Activated T-helper 1 cell treated with anti-CD3 and anti-CD28 coated beads, Interleukin-12 subunit alpha, Interleukin-12 subunit beta, Interleukin-2, Interleukin-4 antibody, amounts not matched to agents 30 ng/mL and 10 ng/mL and 1 ng/mL, durations not matched to agents 14 hours and 24 hours and 36 hours (primary cell): ENCODE measurements at regions of chr16 and their contacts with region 1.

Region 1: DNA sequence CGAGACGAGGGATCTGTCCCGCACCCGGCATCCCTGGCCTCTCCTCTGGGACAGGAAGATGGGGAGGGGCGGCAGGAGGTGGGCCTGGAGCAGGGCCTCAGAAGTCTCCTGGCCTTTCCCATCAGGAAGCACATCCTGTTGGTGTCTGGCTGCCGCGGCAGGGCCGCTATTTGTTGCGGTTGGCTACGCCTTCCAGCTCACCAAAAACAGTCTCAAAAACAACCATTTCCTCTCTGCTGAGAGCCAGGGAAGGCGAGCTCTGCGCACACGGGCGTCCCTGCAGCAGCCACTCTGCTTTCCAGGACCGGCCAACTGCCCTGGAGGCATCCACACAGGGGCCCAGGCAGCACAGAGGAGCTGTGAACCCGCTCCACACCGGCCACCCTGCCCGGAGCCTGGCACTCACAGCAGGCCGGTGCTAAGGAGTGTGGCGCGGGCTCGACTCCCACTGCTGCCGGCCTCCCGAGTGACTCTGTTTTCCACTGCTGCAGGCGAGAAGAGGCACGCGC is at the start of gene TMEM204:
- DNase-seq: peak; percentile 47
- H3K4me3 Mint-ChIP-seq: peak within 1 kb of the TSS; percentile 98
- H3K27ac Mint-ChIP-seq: peak within 1 kb of the TSS; percentile 92
- H3K4me1 Mint-ChIP-seq: peaks cover 44% of the 10 kb centered on the region
- H3K27me3 Mint-ChIP-seq: peaks cover 2% of the 10 kb centered on the region
- total RNA-seq, gene TMEM204: 22.8 and 23.7 TPM in 2 replicates

Region 2: GRCh38 chr16:1579201-1579600 is 45.7 kb after region 1 on chr16:
- intact Hi-C with region 1: loop called (anchors 1 kb)
- DNase-seq: no peak
- H3K4me3 Mint-ChIP-seq: no peak overlapping the region
- H3K27ac Mint-ChIP-seq: no peak overlapping the region
- H3K4me1 Mint-ChIP-seq: no peaks in the 10 kb centered on the region
- H3K27me3 Mint-ChIP-seq: no peaks in the 10 kb centered on the region

Region 3: DNA sequence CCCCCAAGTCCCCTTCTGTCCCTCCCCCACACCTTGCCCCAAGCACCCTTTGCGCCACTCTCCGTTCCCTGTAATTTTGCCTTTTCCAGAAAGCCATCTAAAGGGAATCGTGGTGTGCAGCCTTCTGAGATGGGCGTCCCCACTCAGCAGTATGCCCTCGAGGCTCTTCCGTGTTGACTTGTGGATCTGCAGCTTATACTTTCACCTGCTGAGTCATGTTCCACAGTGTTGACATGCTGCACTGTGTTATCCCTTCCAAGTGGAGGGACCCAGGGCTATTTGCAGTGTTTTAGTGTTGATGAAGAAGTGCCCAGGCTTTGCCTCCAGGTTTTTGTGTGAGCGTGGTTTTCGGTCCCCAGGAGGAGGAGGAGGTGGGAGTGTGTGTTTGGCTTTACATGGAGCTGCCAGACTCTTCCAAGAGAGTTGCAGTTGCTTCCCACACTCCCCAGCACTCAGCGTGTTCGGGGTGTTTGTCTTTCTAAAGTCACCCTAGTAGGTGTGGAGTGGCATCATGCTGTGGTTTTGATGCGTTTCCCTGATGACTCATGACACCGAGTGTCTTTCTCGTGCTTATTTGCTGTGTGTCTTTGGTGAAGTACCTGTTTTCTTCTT is 112.5 kb after region 1 on chr16:
- intact Hi-C with region 1: loop called (anchors 1 kb)
- DNase-seq: peak; percentile 38
- H3K4me3 Mint-ChIP-seq: peak overlapping the region; percentile 12
- H3K27ac Mint-ChIP-seq: peak overlapping the region; percentile 80
- H3K4me1 Mint-ChIP-seq: peaks cover 23% of the 10 kb centered on the region
- H3K27me3 Mint-ChIP-seq: no peaks in the 10 kb centered on the region

Region 4: DNA sequence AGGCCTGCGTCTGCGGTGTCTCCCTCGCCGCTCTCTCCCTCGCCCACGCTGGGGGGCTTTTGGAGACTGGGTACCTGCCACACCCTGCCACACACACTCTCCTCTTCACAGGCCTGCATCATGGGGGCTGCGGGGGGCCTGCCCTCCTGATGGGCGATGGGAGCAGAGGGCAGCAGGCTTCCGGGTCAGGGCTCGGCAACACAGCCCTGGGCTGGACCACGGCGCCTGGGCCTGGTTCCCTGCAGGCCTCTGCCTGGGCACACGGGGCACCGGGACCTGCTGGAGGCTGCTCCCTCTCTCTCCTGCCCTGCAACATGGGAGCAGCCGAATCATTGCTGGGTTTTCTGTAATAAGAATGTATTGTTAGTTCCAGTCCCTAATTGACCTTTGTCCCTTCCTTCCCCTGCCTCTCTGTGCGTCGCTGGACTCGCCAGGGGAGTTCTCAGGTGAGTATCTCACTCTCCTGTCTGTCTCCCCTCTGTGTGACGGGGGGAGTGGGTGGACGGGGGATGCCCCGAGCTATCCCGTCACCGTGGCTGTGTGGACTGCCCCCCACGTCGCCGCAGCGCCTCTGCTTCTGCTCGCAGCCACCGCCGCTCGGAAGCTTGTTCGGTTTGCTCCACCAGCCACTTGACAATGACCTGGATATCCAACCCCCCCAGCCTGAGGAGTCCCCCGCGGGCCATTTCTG is 224.4 kb after region 1 on chr16:
- intact Hi-C with region 1: no loop called
- DNase-seq: no peak
- H3K4me3 Mint-ChIP-seq: no peak overlapping the region
- H3K27ac Mint-ChIP-seq: peak overlapping the region; percentile 12
- H3K4me1 Mint-ChIP-seq: peaks cover 12% of the 10 kb centered on the region
- H3K27me3 Mint-ChIP-seq: no peaks in the 10 kb centered on the region